ENCODE measurements at regions of chr10 and their contacts with region 1.

Region 1: GRCh38 chr10:89278034-89278535 is 23.8 kb upstream of the IFIT2 start:
- DNase-seq: peak; percentile 79 to 86
- ATAC-seq: peak; percentile 91 to 95
- H3K4me3 ChIP-seq: no peak overlapping the region
- H3K27ac ChIP-seq: peak overlapping the region; percentile 86 to 87
- H3K4me1 ChIP-seq: peaks cover 57% of the 10 kb centered on the region
- CTCF ChIP-seq: no peak
- EP300 ChIP-seq: peak; percentile 35 to 65; a peak in 2 of 5 replicates
- POLR2A ChIP-seq: no peak
- RAD21 ChIP-seq: peak; percentile 6 to 27; a peak in 2 of 5 replicates

Region 2: DNA sequence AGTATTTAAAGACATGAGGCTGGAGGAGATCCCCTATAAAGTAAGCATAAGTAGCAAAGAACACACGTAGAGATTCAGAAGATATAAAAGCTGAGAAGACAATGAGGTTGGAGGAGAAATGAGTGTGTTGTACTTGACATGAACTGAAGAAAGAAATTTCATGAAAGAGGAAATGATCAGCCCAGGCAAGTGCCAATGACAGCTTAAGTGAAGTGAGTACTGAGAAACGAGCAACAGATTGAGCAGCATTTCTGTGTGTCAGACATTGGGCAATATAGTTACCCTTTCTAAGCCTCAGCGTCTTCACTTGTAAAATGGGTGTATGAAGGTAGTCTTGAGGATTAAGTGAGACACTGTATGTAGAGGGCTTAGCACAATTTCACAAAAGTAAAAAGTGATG is 21.7 kb before region 1 on chr10:
- CTCF ChIA-PET with region 1: no interaction called
- POLR2A ChIA-PET with region 1: no interaction called
- DNase-seq: no peak
- ATAC-seq: no peak
- H3K4me3 ChIP-seq: no peak overlapping the region
- H3K27ac ChIP-seq: no peak overlapping the region
- H3K4me1 ChIP-seq: peaks cover 9% of the 10 kb centered on the region
- CTCF ChIP-seq: no peak
- EP300 ChIP-seq: no peak
- POLR2A ChIP-seq: no peak
- RAD21 ChIP-seq: no peak

Region 3: GRCh38 chr10:89301721-89302445 is 23.8 kb after region 1 on chr10 and contains the start of gene IFIT2:
- CTCF ChIA-PET with region 1: interaction called, 3 read pairs
- POLR2A ChIA-PET with region 1: interaction called, 12 read pairs
- DNase-seq: peak; percentile 37 to 47
- ATAC-seq: peak; percentile 82 to 86
- H3K4me3 ChIP-seq: peak within 1 kb of the TSS; percentile 38
- H3K27ac ChIP-seq: peak within 1 kb of the TSS; percentile 70 to 83
- H3K4me1 ChIP-seq: peaks cover 16% of the 10 kb centered on the region; the same call in 2 of the 3 replicates
- CTCF ChIP-seq: no peak
- EP300 ChIP-seq: no peak
- POLR2A ChIP-seq: no peak
- RAD21 ChIP-seq: no peak
- polyA plus RNA-seq, gene IFIT2: 0.81 and 1.1 TPM in 2 replicates

Region 4: DNA sequence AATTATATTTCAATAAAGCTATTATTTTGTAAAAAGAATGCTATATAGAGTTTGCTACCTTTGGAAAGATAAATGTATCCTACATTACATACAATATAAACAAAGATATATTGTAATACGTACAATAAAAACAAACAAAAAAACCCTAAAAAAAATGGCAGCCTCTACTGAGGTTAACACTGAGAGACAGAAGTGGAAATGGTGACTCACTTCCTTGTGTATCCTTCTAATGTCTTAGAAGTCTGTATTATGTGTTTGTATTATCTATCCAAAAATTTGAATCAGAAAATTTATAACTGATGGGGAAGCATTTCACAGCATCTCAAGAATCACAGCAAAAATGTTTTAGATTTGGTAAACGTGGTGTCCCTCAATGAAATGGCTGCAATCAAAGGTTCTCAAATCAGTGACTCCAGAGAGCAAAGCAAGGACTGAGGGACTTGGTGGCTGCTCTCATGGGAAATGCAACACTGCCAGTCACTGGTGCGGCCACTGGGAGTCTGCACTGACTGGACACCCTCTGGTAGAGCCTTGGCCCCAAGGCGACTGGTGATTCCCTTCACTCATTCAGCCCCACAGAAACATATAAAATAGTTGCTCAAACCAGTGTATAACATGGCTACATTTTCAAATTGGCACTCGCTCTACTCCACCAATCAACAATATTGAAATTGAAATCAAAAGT is 313.2 kb after region 1 on chr10:
- CTCF ChIA-PET with region 1: no interaction called
- POLR2A ChIA-PET with region 1: no interaction called
- DNase-seq: no peak
- ATAC-seq: no peak
- H3K4me3 ChIP-seq: no peak overlapping the region
- H3K27ac ChIP-seq: no peak overlapping the region
- H3K4me1 ChIP-seq: no peaks in the 10 kb centered on the region
- CTCF ChIP-seq: no peak
- EP300 ChIP-seq: no peak
- POLR2A ChIP-seq: no peak
- RAD21 ChIP-seq: no peak

Measured in A549 (cell line).